ENCODE measurements at regions of chr3 and their contacts with region 1.

Region 1: DNA sequence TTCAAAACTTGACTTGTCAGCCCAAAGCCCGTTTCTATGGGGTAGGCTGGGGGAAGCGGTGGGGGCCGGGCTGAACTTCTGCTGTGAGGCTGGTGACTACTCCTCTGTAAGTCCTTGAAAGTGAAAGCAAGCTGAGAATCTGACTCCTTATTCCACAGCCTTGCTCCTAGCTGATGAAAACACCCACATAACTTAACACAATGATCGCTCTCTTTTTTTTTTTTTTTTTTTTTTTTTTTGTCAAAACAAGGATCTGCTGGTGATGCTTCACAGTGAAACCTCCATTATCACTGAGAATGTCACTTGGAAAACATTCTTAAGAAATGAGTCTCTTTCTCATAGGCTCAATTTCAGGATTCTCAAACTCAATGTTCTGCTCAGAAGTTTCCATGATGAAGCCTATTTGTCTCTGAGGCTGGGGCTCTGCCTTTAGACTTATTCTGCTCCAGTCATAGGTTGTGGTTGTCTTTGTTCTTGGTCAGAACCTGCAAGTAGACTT is 31.4 kb upstream of the TKT start:
- DNase-seq: no peak
- ATAC-seq: no peak
- H3K4me3 Mint-ChIP-seq: no peak overlapping the region
- H3K27ac Mint-ChIP-seq: peak overlapping the region; percentile 69
- H3K4me1 Mint-ChIP-seq: no peaks in the 10 kb centered on the region
- H3K27me3 Mint-ChIP-seq: no peaks in the 10 kb centered on the region

Region 2: DNA sequence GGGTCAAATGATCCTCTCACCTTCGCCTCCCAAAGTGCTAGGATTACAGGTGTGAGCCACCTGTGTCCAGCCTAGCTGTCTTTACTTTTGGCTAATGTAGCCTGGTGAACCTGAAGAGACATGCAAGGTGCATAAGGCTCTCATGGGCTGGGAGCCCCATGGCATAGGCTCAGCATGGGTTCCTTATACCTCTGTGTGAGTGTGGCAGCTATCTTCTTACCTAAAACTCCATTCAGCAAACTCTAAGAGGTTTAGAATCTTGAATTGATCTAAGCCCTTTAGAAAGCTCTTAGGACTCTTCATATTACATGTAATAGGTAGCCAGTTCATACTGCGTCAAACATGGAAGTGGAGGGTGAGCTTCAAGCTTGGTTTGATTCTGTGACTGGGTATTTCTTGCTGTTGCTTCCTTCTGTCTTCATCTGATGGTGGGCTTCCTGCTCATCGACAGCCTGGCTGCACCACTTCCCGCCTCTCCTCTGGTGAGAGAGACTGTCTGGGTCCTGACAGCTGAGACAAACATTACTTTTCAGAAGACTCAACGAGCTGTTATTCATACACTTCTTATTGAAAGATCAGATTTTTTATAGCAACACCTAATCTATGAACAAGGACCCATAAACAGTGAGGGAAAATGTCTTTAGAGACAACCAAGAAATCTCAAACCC is 12.1 kb before region 1 on chr3:
- CTCF ChIA-PET with region 1: interaction called, 14 read pairs
- POLR2A ChIA-PET with region 1: interaction called, 4 read pairs
- DNase-seq: peak; percentile 72
- ATAC-seq: peak; percentile 77
- H3K4me3 Mint-ChIP-seq: peak overlapping the region; percentile 22
- H3K27ac Mint-ChIP-seq: peak overlapping the region; percentile 84
- H3K4me1 Mint-ChIP-seq: peaks cover 24% of the 10 kb centered on the region
- H3K27me3 Mint-ChIP-seq: no peaks in the 10 kb centered on the region

Region 3: GRCh38 chr3:53303957-53304356 is 16.8 kb after region 1 on chr3:
- CTCF ChIA-PET with region 1: interaction called, 11 read pairs
- POLR2A ChIA-PET with region 1: no interaction called
- DNase-seq: no peak
- ATAC-seq: no peak
- H3K4me3 Mint-ChIP-seq: no peak overlapping the region
- H3K27ac Mint-ChIP-seq: no peak overlapping the region
- H3K4me1 Mint-ChIP-seq: no peaks in the 10 kb centered on the region
- H3K27me3 Mint-ChIP-seq: no peaks in the 10 kb centered on the region

Measured in activated CD8-positive, alpha-beta T cell treated with anti-CD3 and anti-CD28 coated beads, Interleukin-2, amount 10 ng/mL, durations not matched to agents 7 days and 5 days (primary cell).